ENCODE measurements at regions of chr10 and their contacts with region 1.

Region 1: DNA sequence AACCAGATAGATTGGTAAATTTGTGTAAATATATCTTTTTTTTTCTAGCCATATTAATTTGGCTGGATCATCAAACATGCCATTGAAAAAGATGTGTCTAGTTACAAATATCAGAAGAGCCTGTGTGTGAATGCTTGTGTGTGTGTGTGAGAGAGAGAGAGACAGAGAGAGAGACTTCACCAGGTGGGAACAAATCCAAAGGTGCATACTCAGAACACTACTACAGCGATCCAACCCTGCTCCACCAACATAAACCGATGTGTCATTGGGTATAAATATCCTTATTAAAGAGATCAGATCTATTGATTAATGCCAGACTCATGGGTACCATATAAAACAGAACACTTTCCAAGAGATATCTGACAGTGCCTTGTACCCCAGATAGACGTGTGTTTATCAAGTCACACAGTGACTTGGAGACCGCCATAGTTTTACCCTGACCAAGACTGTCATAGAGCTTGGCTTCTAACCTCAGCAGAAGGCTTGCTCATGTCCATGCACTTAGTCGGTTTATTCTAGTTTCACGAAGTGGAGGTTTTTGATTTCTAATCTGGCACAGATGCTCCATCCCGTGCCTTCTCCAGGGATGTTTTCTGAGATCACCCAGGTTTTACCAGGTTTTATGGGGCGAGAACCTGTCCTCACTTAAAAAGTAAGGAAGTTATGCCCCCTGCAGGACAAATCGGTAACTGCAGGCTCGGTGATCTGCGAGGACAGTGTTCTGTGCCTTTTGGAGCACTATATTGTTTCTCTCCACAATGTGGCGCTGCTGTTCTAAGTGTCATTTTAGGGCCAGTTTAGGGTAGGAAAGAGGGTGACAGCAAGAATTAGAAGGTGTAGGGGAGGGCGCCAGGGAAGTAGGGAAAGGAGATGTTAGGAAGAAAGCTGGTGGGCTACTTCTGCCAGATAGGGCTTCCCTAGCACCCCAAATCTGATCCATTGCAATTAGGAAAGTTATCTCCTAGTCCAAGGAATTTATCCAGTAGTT is 29.3 kb upstream of the WNT8B start:
- DNase-seq: peak; percentile 97
- ATAC-seq: peak; percentile 99
- H3K4me3 Mint-ChIP-seq: no peak overlapping the region
- H3K27ac Mint-ChIP-seq: no peak overlapping the region
- H3K4me1 Mint-ChIP-seq: peaks cover 11% of the 10 kb centered on the region
- H3K27me3 Mint-ChIP-seq: no peaks in the 10 kb centered on the region

Region 2: DNA sequence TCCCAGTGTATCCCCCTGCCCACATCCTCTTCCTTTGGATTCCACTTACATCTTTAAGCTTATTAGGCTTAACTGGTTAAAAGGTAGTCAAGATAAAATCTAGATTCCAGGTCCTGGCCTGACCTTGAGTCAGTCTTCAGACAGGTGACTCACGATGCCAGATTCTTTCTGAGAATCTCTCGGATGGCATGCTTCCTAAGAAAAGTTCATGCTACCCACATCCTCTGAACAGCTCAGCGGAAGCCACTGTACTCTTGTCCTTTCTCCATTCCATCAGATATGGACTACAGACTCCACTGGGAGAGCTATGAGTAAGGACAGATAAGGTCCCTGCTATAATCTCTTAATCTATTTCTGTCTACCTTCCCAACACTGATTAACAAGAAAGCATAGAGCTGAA is 467.2 kb before region 1 on chr10:
- CTCF ChIA-PET with region 1: no interaction called
- DNase-seq: no peak
- ATAC-seq: no peak
- H3K4me3 Mint-ChIP-seq: no peak overlapping the region
- H3K27ac Mint-ChIP-seq: no peak overlapping the region
- H3K4me1 Mint-ChIP-seq: peaks cover 5% of the 10 kb centered on the region
- H3K27me3 Mint-ChIP-seq: no peaks in the 10 kb centered on the region

Region 3: DNA sequence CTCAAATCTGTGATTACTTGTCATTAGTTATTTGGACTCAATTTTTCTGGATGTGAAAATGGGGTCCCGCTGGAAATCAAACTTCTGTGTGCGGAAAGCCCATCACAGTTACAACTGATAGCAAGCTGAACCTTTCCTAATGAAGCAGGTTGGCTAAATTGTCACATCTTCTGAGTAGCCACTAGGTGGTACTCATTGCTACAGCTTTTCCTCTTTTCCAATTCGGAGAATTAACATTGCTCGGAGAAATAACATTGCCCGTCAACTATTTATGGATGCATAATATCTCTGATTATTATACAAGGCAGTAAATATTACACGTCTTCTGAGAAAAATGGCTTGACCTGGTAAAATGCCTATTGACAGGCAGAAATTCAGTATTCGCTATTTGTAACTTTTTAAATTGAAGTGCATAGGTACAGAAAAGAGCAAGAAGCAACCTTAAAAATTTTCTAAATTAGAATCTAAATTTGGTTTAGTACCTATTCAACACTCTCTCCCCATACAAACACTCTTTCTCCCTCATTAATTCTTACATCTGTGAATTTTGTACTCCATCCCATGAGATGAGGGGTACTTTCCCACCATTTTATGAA is 129.7 kb before region 1 on chr10:
- CTCF ChIA-PET with region 1: interaction called, 12 read pairs
- DNase-seq: no peak
- ATAC-seq: no peak
- H3K4me3 Mint-ChIP-seq: no peak overlapping the region
- H3K27ac Mint-ChIP-seq: no peak overlapping the region
- H3K4me1 Mint-ChIP-seq: no peaks in the 10 kb centered on the region
- H3K27me3 Mint-ChIP-seq: peaks cover 67% of the 10 kb centered on the region

Region 4: GRCh38 chr10:100338434-100339036 is 95.0 kb before region 1 on chr10:
- CTCF ChIA-PET with region 1: interaction called, 236 read pairs
- DNase-seq: peak; percentile 86
- ATAC-seq: peak; percentile 88
- H3K4me3 Mint-ChIP-seq: no peak overlapping the region
- H3K27ac Mint-ChIP-seq: no peak overlapping the region
- H3K4me1 Mint-ChIP-seq: peaks cover 3% of the 10 kb centered on the region
- H3K27me3 Mint-ChIP-seq: peaks cover 16% of the 10 kb centered on the region

Region 5: DNA sequence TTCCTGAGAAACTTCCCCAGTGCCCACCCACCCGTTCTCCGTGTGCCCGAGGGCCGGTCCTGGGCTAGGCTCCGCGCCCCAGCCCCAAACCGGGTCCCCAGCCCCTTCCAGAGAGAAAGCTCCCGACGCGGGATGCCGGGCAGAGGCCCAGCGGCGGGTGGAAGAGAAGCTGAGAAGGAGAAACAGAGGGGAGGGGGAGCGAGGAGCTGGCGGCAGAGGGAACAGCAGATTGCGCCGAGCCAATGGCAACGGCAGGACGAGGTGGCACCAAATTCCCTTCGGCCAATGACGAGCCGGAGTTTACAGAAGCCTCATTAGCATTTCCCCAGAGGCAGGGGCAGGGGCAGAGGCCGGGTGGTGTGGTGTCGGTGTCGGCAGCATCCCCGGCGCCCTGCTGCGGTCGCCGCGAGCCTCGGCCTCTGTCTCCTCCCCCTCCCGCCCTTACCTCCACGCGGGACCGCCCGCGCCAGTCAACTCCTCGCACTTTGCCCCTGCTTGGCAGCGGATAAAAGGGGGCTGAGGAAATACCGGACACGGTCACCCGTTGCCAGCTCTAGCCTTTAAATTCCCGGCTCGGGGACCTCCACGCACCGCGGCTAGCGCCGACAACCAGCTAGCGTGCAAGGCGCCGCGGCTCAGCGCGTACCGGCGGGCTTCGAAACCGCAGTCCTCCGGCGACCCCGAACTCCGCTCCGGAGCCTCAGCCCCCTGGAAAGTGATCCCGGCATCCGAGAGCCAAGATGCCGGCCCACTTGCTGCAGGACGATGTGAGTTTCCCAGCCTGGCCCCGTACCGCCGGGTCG is 86.6 kb before region 1 on chr10 and contains the start of gene SCD:
- CTCF ChIA-PET with region 1: interaction called, 236 read pairs
- DNase-seq: peak; percentile 94
- ATAC-seq: peak; percentile 93
- H3K4me3 Mint-ChIP-seq: peak within 1 kb of the TSS; percentile 98
- H3K27ac Mint-ChIP-seq: peak within 1 kb of the TSS; percentile 83
- H3K4me1 Mint-ChIP-seq: peaks cover 55% of the 10 kb centered on the region
- H3K27me3 Mint-ChIP-seq: no peaks in the 10 kb centered on the region
- total RNA-seq, gene SCD: 121 to 134 TPM

Region 6: DNA sequence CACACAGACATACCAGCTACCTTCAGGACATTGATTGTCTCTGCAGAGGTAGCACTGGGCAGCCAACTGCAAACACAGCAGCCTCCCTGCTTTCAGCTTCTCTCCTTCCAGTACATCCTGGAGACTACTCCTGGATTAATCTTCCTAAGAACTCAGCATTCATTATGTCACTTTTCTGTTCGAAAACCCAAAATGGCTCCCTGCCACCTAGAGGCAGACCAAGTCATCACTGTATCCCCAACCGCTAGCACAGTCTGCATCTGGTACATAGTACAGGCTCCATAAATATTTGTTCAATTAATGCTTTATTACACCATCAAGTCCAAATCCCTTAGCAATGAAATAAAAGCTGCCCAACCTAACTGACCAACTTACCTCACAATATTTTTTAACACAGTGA is 91.1 kb after region 1 on chr10:
- CTCF ChIA-PET with region 1: interaction called, 272 read pairs
- DNase-seq: no peak
- ATAC-seq: no peak
- H3K4me3 Mint-ChIP-seq: no peak overlapping the region
- H3K27ac Mint-ChIP-seq: peak overlapping the region; percentile 28
- H3K4me1 Mint-ChIP-seq: peaks cover 28% of the 10 kb centered on the region
- H3K27me3 Mint-ChIP-seq: no peaks in the 10 kb centered on the region

Region 7: GRCh38 chr10:100569618-100570473 is 136.3 kb after region 1 on chr10:
- CTCF ChIA-PET with region 1: no interaction called
- DNase-seq: no peak
- ATAC-seq: no peak
- H3K4me3 Mint-ChIP-seq: no peak overlapping the region
- H3K27ac Mint-ChIP-seq: no peak overlapping the region
- H3K4me1 Mint-ChIP-seq: peaks cover 3% of the 10 kb centered on the region
- H3K27me3 Mint-ChIP-seq: peaks cover 14% of the 10 kb centered on the region

Measured in activated CD8-positive, alpha-beta memory T cell treated with anti-CD3 and anti-CD28 coated beads, Interleukin-2, amount 10 ng/mL, durations not matched to agents 7 days and 5 days (primary cell).